ENCODE measurements at regions of chr9 and their contacts with region 1.

Region 1: DNA sequence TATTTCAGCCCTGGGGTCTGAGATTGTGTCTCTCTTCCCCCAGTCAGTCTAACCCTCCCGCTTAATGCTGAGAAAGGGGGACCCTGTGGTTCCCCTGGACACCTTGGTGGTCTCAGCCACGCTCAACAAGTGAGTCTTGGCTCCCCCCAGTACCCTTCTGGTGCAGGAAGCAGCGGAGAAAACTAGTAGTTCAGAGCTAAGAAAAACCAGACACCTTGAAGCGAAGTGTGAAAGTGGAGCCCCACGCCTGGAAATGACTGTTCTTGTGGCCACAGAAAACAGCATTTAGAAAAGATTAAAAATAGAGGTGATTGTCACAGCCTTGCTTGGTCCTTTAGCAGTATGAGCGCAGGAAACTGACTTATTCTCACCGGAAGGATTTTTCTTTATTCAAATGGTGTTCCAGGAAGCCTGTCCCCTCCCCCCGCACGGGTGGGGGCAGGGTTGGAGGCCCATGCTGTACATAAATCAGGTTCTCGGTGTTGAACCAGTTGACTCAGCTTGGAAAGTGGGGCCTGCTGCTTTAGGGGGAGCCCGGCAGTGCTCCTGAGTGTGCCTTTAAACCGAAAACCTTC is 8.1 kb downstream of the ARPC5L start:
- DNase-seq: peak; percentile 92
- H3K4me3 ChIP-seq: peak overlapping the region; percentile 78 to 99 (median 94)
- H3K27ac ChIP-seq: peak overlapping the region; percentile 84 to 98 (median 96)
- H3K4me1 ChIP-seq: peaks cover 48 to 75% (median 64%) of the 10 kb centered on the region in 6 donors
- H3K27me3 ChIP-seq: no peaks in the 10 kb centered on the region
- CTCF ChIP-seq: no peak
- POLR2A ChIP-seq: peak in 1 of 3 donors; percentile 29

Region 2: GRCh38 chr9:124934290-124934689 is 64.2 kb after region 1 on chr9:
- intact Hi-C with region 1: loop called (anchors 10 kb)
- DNase-seq: no peak
- H3K4me3 ChIP-seq: no peak overlapping the region
- H3K27ac ChIP-seq: peak overlapping the region in 6 of 8 donors; percentile 1 to 63 (median 32)
- H3K4me1 ChIP-seq: peaks cover 4 to 58% (median 16%) of the 10 kb centered on the region in 6 donors
- H3K27me3 ChIP-seq: no peaks in the 10 kb centered on the region
- CTCF ChIP-seq: no peak
- POLR2A ChIP-seq: no peak

Region 3: DNA sequence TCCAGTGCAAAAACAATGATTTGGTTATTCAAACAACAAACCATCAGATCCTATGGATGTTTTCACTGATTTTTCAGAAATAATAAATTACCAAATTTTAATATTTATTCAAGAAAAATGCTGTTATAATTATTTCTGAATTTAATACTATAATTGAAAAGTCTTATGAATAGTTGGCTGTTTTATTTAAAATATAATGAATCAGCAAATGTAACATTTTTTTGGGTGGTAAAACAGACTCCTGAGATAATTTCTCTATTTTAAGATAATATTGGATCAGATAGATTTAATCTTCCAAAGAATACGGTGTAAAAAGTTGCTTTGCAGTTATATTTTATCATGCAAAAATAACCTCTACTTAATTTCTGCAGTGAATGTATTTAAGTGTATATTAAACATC is 76.1 kb after region 1 on chr9:
- intact Hi-C with region 1: no loop called
- DNase-seq: no peak
- H3K4me3 ChIP-seq: no peak overlapping the region
- H3K27ac ChIP-seq: no peak overlapping the region
- H3K4me1 ChIP-seq: peaks cover 0 to 30% (median 10%) of the 10 kb centered on the region in 6 donors
- H3K27me3 ChIP-seq: no peaks in the 10 kb centered on the region
- CTCF ChIP-seq: no peak
- POLR2A ChIP-seq: no peak

Measured in spleen (tissue), 13 donors.